CD8-positive, alpha-beta T cell (primary cell): ENCODE measurements at regions of chr9 and their contacts with region 1.

Region 1: DNA sequence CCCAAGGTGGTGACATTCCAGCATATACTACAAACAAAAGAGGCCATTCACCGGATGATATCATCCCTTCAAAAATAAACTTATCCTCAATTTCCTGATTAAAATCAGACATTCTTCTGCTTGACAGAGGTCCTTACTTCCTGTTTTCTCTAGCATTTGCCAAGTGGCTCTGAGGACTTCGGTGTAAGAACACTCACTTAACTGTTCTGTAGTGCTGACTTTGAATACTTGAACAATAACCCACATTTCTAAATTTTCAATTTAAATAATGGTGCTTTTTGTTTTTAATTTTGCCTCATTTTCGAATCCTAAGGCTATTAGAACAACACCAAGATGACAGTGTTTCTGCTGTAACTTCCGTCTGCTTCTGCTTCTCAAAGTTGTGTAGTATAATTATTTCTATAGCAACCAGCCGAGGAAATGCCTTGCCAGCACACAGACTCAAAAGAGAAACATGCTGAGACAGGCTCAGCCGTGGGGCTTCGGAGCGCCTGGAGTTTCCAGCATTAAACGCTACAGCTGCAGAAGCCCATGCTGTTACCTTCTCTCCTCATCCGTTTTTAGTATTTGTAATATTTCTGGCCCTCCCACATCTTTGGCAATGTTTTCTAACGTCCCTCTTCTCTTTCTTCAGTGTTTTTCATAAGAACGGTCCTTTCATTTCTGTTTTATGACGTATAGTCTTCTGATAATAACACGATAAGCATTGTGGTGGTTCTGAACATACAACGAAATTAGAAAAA is 19.5 kb upstream of the ANXA1 start:
- DNase-seq: peak; percentile 51 to 92 (median 72)
- ATAC-seq: peak; percentile 90
- H3K4me3 ChIP-seq: peak overlapping the region; percentile 57 to 65
- H3K4me3 Mint-ChIP-seq: peak overlapping the region; percentile 87
- H3K27ac ChIP-seq: peak overlapping the region; percentile 87 to 94
- H3K27ac Mint-ChIP-seq: peak overlapping the region; percentile 95
- H3K4me1 ChIP-seq: peaks cover 7% of the 10 kb centered on the region
- H3K4me1 Mint-ChIP-seq: peaks cover 25% of the 10 kb centered on the region
- H3K27me3 ChIP-seq: no peaks in the 10 kb centered on the region
- H3K27me3 Mint-ChIP-seq: no peaks in the 10 kb centered on the region
- CTCF ChIP-seq: no peak

Region 2: GRCh38 chr9:73116031-73116430 is 16.2 kb before region 1 on chr9:
- CTCF ChIA-PET with region 1: interaction called, 3 read pairs
- POLR2A ChIA-PET with region 1: no interaction called
- intact Hi-C with region 1: loop called in 1 of 2 experiments (anchors 1 kb)
- DNase-seq: no peak
- ATAC-seq: no peak
- H3K4me3 ChIP-seq: no peak overlapping the region
- H3K4me3 Mint-ChIP-seq: no peak overlapping the region
- H3K27ac ChIP-seq: no peak overlapping the region
- H3K27ac Mint-ChIP-seq: no peak overlapping the region
- H3K4me1 ChIP-seq: peaks cover 21% of the 10 kb centered on the region
- H3K4me1 Mint-ChIP-seq: peaks cover 23% of the 10 kb centered on the region
- H3K27me3 ChIP-seq: no peaks in the 10 kb centered on the region
- H3K27me3 Mint-ChIP-seq: no peaks in the 10 kb centered on the region
- CTCF ChIP-seq: no peak

Region 3: GRCh38 chr9:73143606-73144328 is 11.6 kb after region 1 on chr9:
- CTCF ChIA-PET with region 1: interaction called, 6 read pairs
- POLR2A ChIA-PET with region 1: interaction called, 5 read pairs
- intact Hi-C with region 1: loop called (anchors 1 to 2 kb)
- DNase-seq: no peak
- ATAC-seq: no peak
- H3K4me3 ChIP-seq: no peak overlapping the region
- H3K4me3 Mint-ChIP-seq: no peak overlapping the region
- H3K27ac ChIP-seq: no peak overlapping the region
- H3K27ac Mint-ChIP-seq: no peak overlapping the region
- H3K4me1 ChIP-seq: peaks cover 3% of the 10 kb centered on the region
- H3K4me1 Mint-ChIP-seq: peaks cover 12% of the 10 kb centered on the region
- H3K27me3 ChIP-seq: no peaks in the 10 kb centered on the region
- H3K27me3 Mint-ChIP-seq: no peaks in the 10 kb centered on the region
- CTCF ChIP-seq: no peak

Region 4: GRCh38 chr9:73154760-73155159 is 22.6 kb after region 1 on chr9:
- CTCF ChIA-PET with region 1: interaction called, 3 read pairs
- POLR2A ChIA-PET with region 1: interaction called, 10 read pairs
- intact Hi-C with region 1: loop called (anchors 1 to 2 kb)
- DNase-seq: peak in 3 of 9 experiments; percentile 20 to 74 (median 55)
- ATAC-seq: peak; percentile 43
- H3K4me3 ChIP-seq: peak overlapping the region; percentile 39 to 64
- H3K4me3 Mint-ChIP-seq: peak overlapping the region; percentile 89
- H3K27ac ChIP-seq: peak overlapping the region; percentile 63 to 83
- H3K27ac Mint-ChIP-seq: peak overlapping the region; percentile 93
- H3K4me1 ChIP-seq: peaks cover 76% of the 10 kb centered on the region
- H3K4me1 Mint-ChIP-seq: peaks cover 76% of the 10 kb centered on the region
- H3K27me3 ChIP-seq: no peaks in the 10 kb centered on the region
- H3K27me3 Mint-ChIP-seq: no peaks in the 10 kb centered on the region
- CTCF ChIP-seq: no peak